CD8-positive, alpha-beta T cell (primary cell): ENCODE measurements at regions of chr19 and their contacts with region 1.

Region 1: DNA sequence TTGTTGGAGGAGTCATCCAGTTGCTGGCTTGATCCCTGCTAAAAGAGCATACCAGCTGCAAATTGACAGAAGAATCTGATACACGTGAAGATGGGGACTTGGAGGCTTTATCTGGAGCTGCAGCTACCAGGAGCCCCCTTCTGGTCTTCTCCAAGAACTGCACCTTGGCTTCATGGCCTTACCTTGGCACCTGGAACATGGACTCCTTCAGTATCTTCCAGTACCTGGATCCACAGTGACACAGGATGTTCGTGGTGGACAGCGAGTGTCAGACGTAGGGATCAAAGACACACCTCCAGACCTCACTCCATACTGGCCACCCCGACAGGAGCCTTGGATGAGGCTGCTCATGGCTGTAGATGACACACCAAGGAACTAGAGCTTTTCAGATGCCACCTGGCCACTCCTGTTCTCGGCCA is 9.9 kb upstream of the ACSBG2 start:
- DNase-seq: peak; percentile 32 to 86 (median 65)
- ATAC-seq: peak; percentile 95
- H3K4me3 ChIP-seq: no peak overlapping the region
- H3K4me3 Mint-ChIP-seq: no peak overlapping the region
- H3K27ac ChIP-seq: no peak overlapping the region
- H3K27ac Mint-ChIP-seq: no peak overlapping the region
- H3K4me1 ChIP-seq: no peaks in the 10 kb centered on the region
- H3K4me1 Mint-ChIP-seq: no peaks in the 10 kb centered on the region
- H3K27me3 ChIP-seq: no peaks in the 10 kb centered on the region
- H3K27me3 Mint-ChIP-seq: no peaks in the 10 kb centered on the region
- CTCF ChIP-seq: peak; percentile 83

Region 2: GRCh38 chr19:5891938-5892771 is 233.4 kb before region 1 on chr19:
- CTCF ChIA-PET with region 1: no interaction called
- POLR2A ChIA-PET with region 1: no interaction called
- intact Hi-C with region 1: no loop called
- DNase-seq: peak in 1 of 9 experiments; percentile 37
- ATAC-seq: peak; percentile 40
- H3K4me3 ChIP-seq: no peak overlapping the region
- H3K4me3 Mint-ChIP-seq: no peak overlapping the region
- H3K27ac ChIP-seq: no peak overlapping the region
- H3K27ac Mint-ChIP-seq: no peak overlapping the region
- H3K4me1 ChIP-seq: peaks cover 9% of the 10 kb centered on the region
- H3K4me1 Mint-ChIP-seq: peaks cover 3% of the 10 kb centered on the region
- H3K27me3 ChIP-seq: no peaks in the 10 kb centered on the region
- H3K27me3 Mint-ChIP-seq: peaks cover 9% of the 10 kb centered on the region
- CTCF ChIP-seq: no peak

Region 3: GRCh38 chr19:5987077-5987818 is 138.3 kb before region 1 on chr19:
- CTCF ChIA-PET with region 1: interaction called, 3 read pairs
- POLR2A ChIA-PET with region 1: no interaction called
- intact Hi-C with region 1: loop called in 1 of 2 experiments (anchors 1 kb)
- DNase-seq: peak; percentile 41 to 85 (median 74)
- ATAC-seq: peak; percentile 71
- H3K4me3 ChIP-seq: peak overlapping the region; percentile 36 to 41
- H3K4me3 Mint-ChIP-seq: peak overlapping the region; percentile 79
- H3K27ac ChIP-seq: no peak overlapping the region
- H3K27ac Mint-ChIP-seq: no peak overlapping the region
- H3K4me1 ChIP-seq: peaks cover 5% of the 10 kb centered on the region
- H3K4me1 Mint-ChIP-seq: peaks cover 26% of the 10 kb centered on the region
- H3K27me3 ChIP-seq: no peaks in the 10 kb centered on the region
- H3K27me3 Mint-ChIP-seq: no peaks in the 10 kb centered on the region
- CTCF ChIP-seq: peak; percentile 93

Region 4: GRCh38 chr19:6042776-6043733 is 82.5 kb before region 1 on chr19:
- CTCF ChIA-PET with region 1: interaction called, 138 read pairs
- POLR2A ChIA-PET with region 1: interaction called, 8 read pairs
- intact Hi-C with region 1: no loop called
- DNase-seq: no peak
- ATAC-seq: no peak
- H3K4me3 ChIP-seq: no peak overlapping the region
- H3K4me3 Mint-ChIP-seq: no peak overlapping the region
- H3K27ac ChIP-seq: no peak overlapping the region
- H3K27ac Mint-ChIP-seq: no peak overlapping the region
- H3K4me1 ChIP-seq: no peaks in the 10 kb centered on the region
- H3K4me1 Mint-ChIP-seq: no peaks in the 10 kb centered on the region
- H3K27me3 ChIP-seq: no peaks in the 10 kb centered on the region
- H3K27me3 Mint-ChIP-seq: no peaks in the 10 kb centered on the region
- CTCF ChIP-seq: no peak

Region 5: DNA sequence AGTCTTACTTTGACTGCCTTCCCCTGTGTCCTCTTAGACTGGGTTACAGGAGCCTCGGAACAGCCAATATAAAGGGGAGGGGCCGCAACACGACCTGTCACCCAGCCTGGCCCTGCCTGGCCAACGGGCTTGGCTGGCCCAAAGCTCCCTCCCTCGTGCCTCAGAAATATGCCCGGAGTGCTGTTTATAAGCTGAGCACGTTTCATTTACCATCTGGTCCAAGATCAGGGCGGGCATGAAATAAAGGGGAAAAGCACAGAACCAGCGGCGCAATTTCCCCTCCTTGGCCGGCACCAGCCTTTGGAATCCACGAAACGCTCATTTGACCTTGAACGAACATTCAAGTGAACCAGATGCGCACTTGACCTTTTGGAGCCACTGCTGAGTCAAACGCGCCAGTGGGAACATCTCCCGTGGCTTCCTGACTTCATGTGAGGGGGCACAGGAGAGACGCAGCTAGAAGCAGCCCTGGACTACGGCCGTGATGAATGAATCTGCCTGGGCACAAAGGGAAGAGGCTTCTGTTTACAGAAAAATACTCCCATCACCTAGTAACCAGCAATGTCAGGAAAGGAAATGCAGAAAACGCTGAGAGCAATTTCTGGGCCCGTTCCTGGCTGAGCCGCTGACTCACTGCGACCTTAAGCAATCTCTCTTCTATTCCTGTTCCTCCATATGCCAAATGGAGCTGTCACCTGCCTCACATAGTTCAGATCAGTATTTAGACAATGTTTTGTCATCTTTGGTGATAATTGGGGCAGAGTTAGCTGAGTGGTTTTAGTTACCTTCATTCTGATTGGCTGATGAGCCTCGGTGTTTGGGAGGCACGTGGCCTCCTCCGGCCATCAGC is 68.6 kb before region 1 on chr19:
- CTCF ChIA-PET with region 1: interaction called, 80 read pairs
- POLR2A ChIA-PET with region 1: no interaction called
- intact Hi-C with region 1: no loop called
- DNase-seq: peak in 2 of 9 experiments; percentile 27 to 49
- ATAC-seq: no peak
- H3K4me3 ChIP-seq: no peak overlapping the region
- H3K4me3 Mint-ChIP-seq: no peak overlapping the region
- H3K27ac ChIP-seq: no peak overlapping the region
- H3K27ac Mint-ChIP-seq: no peak overlapping the region
- H3K4me1 ChIP-seq: peaks cover 17% of the 10 kb centered on the region
- H3K4me1 Mint-ChIP-seq: peaks cover 25% of the 10 kb centered on the region
- H3K27me3 ChIP-seq: no peaks in the 10 kb centered on the region
- H3K27me3 Mint-ChIP-seq: no peaks in the 10 kb centered on the region
- CTCF ChIP-seq: no peak

Region 6: GRCh38 chr19:6076675-6077463 is 48.7 kb before region 1 on chr19:
- CTCF ChIA-PET with region 1: interaction called, 31 read pairs
- POLR2A ChIA-PET with region 1: no interaction called
- intact Hi-C with region 1: loop called in 1 of 2 experiments (anchors 1 kb)
- DNase-seq: no peak
- ATAC-seq: no peak
- H3K4me3 ChIP-seq: no peak overlapping the region
- H3K4me3 Mint-ChIP-seq: no peak overlapping the region
- H3K27ac ChIP-seq: no peak overlapping the region
- H3K27ac Mint-ChIP-seq: no peak overlapping the region
- H3K4me1 ChIP-seq: no peaks in the 10 kb centered on the region
- H3K4me1 Mint-ChIP-seq: no peaks in the 10 kb centered on the region
- H3K27me3 ChIP-seq: no peaks in the 10 kb centered on the region
- H3K27me3 Mint-ChIP-seq: no peaks in the 10 kb centered on the region
- CTCF ChIP-seq: no peak

Region 7: DNA sequence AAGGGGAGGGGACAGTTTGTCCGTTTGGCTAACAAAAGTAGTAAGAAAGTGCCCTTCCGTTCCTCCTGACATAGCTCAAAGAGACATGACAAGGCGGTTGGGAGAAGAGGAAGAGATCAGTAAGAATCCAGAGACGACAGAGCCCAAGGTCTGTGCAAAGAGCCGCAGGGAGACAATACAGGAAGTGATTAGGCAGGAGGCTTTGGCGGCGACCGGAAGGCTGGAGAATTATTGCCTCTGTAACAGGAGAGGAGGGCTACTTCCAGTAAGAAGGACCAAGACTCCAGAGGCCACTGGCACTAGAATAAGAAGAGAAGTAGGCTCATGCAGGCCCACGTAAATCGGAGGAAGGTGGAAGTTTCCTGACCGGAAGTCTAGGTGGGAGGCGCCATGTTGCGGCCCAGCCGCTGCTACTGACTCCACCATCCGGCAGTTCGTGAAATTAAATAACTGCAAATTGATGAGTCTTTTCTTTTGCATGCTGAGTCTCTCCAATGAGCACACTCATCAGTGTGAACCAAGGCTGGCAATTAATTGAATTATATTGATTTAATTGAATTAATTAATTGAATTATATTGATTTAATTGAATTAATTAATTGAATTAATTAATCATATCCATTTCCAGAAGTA is 25.2 kb before region 1 on chr19:
- CTCF ChIA-PET with region 1: interaction called, 20 read pairs
- POLR2A ChIA-PET with region 1: no interaction called
- intact Hi-C with region 1: no loop called
- DNase-seq: peak in 5 of 9 experiments; percentile 20 to 73 (median 43)
- ATAC-seq: peak; percentile 36
- H3K4me3 ChIP-seq: peak overlapping the region; percentile 35 to 40
- H3K4me3 Mint-ChIP-seq: peak overlapping the region; percentile 74
- H3K27ac ChIP-seq: peak overlapping the region in 1 of 2 experiments; percentile 48
- H3K27ac Mint-ChIP-seq: peak overlapping the region; percentile 72
- H3K4me1 ChIP-seq: peaks cover 4% of the 10 kb centered on the region
- H3K4me1 Mint-ChIP-seq: peaks cover 15% of the 10 kb centered on the region
- H3K27me3 ChIP-seq: no peaks in the 10 kb centered on the region
- H3K27me3 Mint-ChIP-seq: no peaks in the 10 kb centered on the region
- CTCF ChIP-seq: no peak